ENCODE measurements at regions of chr10 and their contacts with region 1.

Region 1: DNA sequence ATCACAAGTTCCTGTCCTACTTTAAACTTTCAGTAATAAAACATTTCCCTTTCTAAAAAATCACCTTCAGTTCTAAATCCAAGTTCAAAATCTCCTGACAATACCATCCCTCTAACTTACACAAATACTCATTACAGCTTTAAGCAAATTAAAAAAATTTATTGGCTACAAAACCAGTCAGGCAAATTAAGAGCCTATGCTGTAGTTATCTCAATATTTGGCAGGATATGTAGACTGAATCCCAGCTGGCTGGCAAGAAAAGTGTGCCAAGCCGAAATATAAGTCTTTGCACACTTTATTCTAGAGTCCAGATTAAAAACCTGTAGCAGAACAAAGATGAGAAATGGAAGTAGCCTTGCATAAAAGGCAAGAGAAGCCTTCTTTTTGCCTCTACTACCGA is 9.5 kb downstream of the WAPL start:
- DNase-seq: no peak
- ATAC-seq: peak in 2 of 4 donors; percentile 37 to 67
- H3K4me3 ChIP-seq: no peak overlapping the region
- H3K27ac ChIP-seq: no peak overlapping the region
- H3K4me1 ChIP-seq: peaks cover 11 to 30% (median 12%) of the 10 kb centered on the region in 3 donors
- H3K27me3 ChIP-seq: no peaks in the 10 kb centered on the region
- CTCF ChIP-seq: no peak

Region 2: DNA sequence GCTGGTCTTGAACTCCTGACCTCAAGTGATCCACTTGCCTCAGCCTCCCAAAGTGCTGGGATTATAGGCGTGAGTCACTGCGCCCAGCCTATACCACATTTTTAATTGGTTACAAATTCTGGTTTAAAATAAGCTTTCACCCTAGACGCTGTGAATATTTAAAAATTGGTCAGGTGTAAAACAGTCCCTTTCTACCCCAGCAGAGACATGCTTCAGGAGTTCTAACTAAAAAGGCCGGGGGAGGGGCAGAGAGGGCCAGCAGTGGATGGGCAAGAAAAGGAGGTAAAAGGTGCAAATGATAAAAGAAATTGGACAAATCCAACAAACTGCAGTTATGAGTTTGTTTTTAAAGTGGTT is 60.6 kb before region 1 on chr10:
- intact Hi-C with region 1: loop called in 1 of 3 experiments (anchors 10 kb)
- DNase-seq: no peak
- ATAC-seq: no peak
- H3K4me3 ChIP-seq: no peak overlapping the region
- H3K27ac ChIP-seq: no peak overlapping the region
- H3K4me1 ChIP-seq: peaks cover 4 to 17% (median 10%) of the 10 kb centered on the region in 3 donors
- H3K27me3 ChIP-seq: no peaks in the 10 kb centered on the region
- CTCF ChIP-seq: no peak